WTC11 (cell line): ENCODE measurements at regions of chr16 and their contacts with region 1.

Region 1: GRCh38 chr16:77951775-77952174 is 70.6 kb upstream of the CLEC3A start:
- DNase-seq: no peak
- ATAC-seq: peak; percentile 74
- H3K4me3 Mint-ChIP-seq: no peak overlapping the region
- H3K27ac Mint-ChIP-seq: no peak overlapping the region
- H3K4me1 Mint-ChIP-seq: peaks cover 48% of the 10 kb centered on the region
- H3K27me3 Mint-ChIP-seq: peaks cover 23% of the 10 kb centered on the region
- CTCF ChIP-seq: peak; percentile 43; the same call in 1 of the 2 replicates

Region 2: DNA sequence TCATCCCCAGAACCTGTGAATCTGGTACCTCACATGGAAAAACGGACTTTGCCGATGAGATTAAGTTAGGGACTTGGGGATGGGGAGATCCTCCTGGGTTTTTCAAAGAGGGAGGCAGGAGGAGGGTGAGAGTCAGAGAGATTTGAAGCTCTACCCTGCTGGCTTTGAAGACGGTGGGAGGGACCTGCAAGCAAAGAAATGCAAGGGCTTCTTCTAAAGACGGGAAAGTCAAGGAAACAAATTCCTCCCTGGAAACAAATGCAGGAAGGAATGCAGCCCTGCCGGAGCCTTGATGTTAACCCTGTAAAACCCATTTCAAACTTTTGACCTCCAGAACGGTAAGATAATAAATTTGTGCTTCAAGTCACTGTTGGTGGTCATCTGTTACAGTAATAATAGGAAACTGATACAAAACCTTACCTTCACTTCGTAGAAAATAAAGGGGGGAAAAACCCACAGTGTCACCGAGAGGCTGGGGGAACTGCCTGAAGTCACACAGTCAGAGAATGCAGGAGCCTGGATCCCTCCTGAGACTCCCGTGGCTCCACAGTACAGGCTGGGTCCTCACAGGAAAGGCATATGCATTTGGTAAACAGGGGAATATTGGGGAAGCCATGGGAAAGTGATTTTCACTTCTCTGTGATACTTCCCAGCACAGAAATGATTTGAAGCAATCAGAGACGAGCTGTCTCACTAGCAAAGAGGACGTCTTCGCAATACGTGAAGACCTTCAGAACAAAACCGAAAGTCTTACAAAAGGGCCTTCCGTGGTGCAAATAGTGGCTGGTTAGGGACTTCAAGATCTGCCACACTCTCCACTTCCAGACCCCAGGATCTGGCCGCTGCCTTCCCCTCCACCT is 11.6 kb after region 1 on chr16:
- CTCF ChIA-PET with region 1: interaction called, 47 read pairs
- POLR2A ChIA-PET with region 1: interaction called, 4 read pairs
- DNase-seq: peak; percentile 36
- ATAC-seq: peak; percentile 50
- H3K4me3 Mint-ChIP-seq: peak overlapping the region; percentile 20
- H3K27ac Mint-ChIP-seq: peak overlapping the region; percentile 77
- H3K4me1 Mint-ChIP-seq: peaks cover 67% of the 10 kb centered on the region
- H3K27me3 Mint-ChIP-seq: peaks cover 66% of the 10 kb centered on the region
- CTCF ChIP-seq: no peak

Region 3: GRCh38 chr16:78022347-78023060 is 70.7 kb after region 1 on chr16 and contains the start of gene CLEC3A:
- CTCF ChIA-PET with region 1: no interaction called
- POLR2A ChIA-PET with region 1: no interaction called
- DNase-seq: no peak
- ATAC-seq: peak; percentile 80
- H3K4me3 Mint-ChIP-seq: no peak within 1 kb of the TSS
- H3K27ac Mint-ChIP-seq: no peak within 1 kb of the TSS
- H3K4me1 Mint-ChIP-seq: peaks cover 25% of the 10 kb centered on the region
- H3K27me3 Mint-ChIP-seq: no peaks in the 10 kb centered on the region; the same call in 1 of the 2 replicates
- CTCF ChIP-seq: no peak
- total RNA-seq, gene CLEC3A: not detected in 3 replicates

Region 4: GRCh38 chr16:78211893-78212292 is 260.1 kb after region 1 on chr16:
- CTCF ChIA-PET with region 1: no interaction called
- POLR2A ChIA-PET with region 1: no interaction called
- DNase-seq: peak; percentile 30
- ATAC-seq: peak; percentile 82
- H3K4me3 Mint-ChIP-seq: no peak overlapping the region
- H3K27ac Mint-ChIP-seq: 0 out of 2 replicates have a peak overlapping the region, but pooled peaks have one; percentile 7
- H3K4me1 Mint-ChIP-seq: peaks cover 18% of the 10 kb centered on the region
- H3K27me3 Mint-ChIP-seq: no peaks in the 10 kb centered on the region
- CTCF ChIP-seq: no peak